Calu3 (cell line): ENCODE measurements at regions of chr20 and their contacts with region 1.

Region 1: DNA sequence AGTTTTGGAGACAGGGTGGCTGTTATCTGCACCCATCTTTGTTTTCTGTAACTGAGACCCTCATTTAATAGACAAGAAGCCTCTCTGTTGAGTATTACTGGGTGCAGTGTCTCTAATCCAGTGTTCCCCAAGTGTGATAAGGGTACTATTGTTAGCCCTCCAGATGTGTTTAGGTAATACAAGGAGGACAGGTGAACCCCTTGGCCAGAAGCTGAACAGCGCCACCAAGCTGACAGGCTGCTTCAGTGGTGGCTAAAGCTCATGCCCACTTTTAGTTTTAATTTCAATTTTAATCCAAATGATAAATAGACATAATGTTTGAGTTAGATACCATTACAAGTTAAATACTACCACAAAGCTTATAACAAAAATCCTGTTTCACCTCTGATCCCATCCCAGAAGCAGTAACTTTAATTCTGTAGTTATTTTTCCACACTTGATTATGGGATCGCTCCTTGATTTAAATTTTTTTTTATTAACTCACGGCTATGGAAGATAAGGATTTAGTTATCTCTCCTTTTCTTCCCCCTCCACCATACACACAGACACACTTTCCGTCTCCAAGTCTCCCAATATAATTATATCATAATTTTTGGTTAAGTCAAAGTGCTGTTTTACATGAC is 8.4 kb upstream of the STK35 start:
- DNase-seq: peak; percentile 42
- H3K4me3 Mint-ChIP-seq: no peak overlapping the region
- H3K27ac Mint-ChIP-seq: no peak overlapping the region
- H3K4me1 Mint-ChIP-seq: no peaks in the 10 kb centered on the region
- H3K27me3 Mint-ChIP-seq: peaks cover 53% of the 10 kb centered on the region
- CTCF ChIP-seq: peak; percentile 46

Region 2: GRCh38 chr20:1764136-1765033 is 328.9 kb before region 1 on chr20:
- CTCF ChIA-PET with region 1: no interaction called
- intact Hi-C with region 1: loop called (anchors 2 kb)
- DNase-seq: peak; percentile 72
- H3K4me3 Mint-ChIP-seq: no peak overlapping the region
- H3K27ac Mint-ChIP-seq: no peak overlapping the region
- H3K4me1 Mint-ChIP-seq: peaks cover 15% of the 10 kb centered on the region
- H3K27me3 Mint-ChIP-seq: no peaks in the 10 kb centered on the region
- CTCF ChIP-seq: peak; percentile 65

Region 3: GRCh38 chr20:1965520-1966351 is 127.5 kb before region 1 on chr20:
- CTCF ChIA-PET with region 1: interaction called, 4 read pairs
- intact Hi-C with region 1: loop called (anchors 2 kb)
- DNase-seq: peak; percentile 77
- H3K4me3 Mint-ChIP-seq: peak overlapping the region; percentile 16
- H3K27ac Mint-ChIP-seq: no peak overlapping the region
- H3K4me1 Mint-ChIP-seq: no peaks in the 10 kb centered on the region
- H3K27me3 Mint-ChIP-seq: peaks cover 57% of the 10 kb centered on the region
- CTCF ChIP-seq: peak; percentile 72

Region 4: GRCh38 chr20:2005831-2006426 is 87.3 kb before region 1 on chr20:
- CTCF ChIA-PET with region 1: interaction called, 3 read pairs
- intact Hi-C with region 1: loop called (anchors 1 kb)
- DNase-seq: peak; percentile 73
- H3K4me3 Mint-ChIP-seq: no peak overlapping the region
- H3K27ac Mint-ChIP-seq: no peak overlapping the region
- H3K4me1 Mint-ChIP-seq: no peaks in the 10 kb centered on the region
- H3K27me3 Mint-ChIP-seq: peaks cover 42% of the 10 kb centered on the region
- CTCF ChIP-seq: no peak

Region 5: DNA sequence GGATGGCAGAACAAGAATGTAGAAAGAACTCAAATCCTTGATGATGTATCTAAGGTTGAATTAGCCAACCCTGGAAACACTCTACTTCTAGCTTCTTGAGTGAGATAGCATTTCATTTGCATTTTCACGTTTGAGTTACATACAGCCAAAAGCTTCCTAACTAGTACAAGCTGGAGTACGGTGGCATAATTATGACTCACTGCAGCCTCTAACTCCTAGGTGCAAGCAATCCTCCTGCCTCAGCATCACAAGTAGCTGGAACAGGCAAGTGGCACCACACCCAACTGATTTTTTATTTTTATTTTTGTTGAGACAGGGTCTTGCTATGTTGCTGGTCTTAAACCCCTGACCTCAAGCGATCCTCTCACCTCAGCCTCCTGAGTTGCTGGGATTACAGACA is 28.2 kb before region 1 on chr20:
- CTCF ChIA-PET with region 1: no interaction called
- intact Hi-C with region 1: no loop called
- DNase-seq: no peak
- H3K4me3 Mint-ChIP-seq: no peak overlapping the region
- H3K27ac Mint-ChIP-seq: no peak overlapping the region
- H3K4me1 Mint-ChIP-seq: no peaks in the 10 kb centered on the region
- H3K27me3 Mint-ChIP-seq: peaks cover 37% of the 10 kb centered on the region
- CTCF ChIP-seq: no peak

Region 6: DNA sequence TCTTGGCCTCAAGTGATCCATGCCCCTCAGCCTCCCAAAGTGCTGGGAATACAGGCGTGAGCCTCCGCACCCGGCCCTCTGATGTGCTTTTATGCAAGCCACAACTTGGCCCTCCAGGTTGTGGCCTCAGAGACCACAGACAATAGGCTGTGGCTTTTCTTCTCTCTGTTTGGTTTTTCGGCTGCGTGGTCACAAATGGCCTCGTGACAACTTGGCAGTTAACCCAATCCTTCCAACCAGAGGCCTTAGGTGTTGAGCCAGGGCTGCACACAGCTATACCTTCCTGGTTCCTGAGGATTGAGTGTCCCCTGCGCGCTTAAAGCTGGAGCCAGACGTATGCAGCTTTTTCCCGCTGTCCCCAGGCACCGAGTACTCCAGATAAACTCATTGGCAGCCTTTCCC is 196.2 kb after region 1 on chr20:
- CTCF ChIA-PET with region 1: no interaction called
- intact Hi-C with region 1: no loop called
- DNase-seq: no peak
- H3K4me3 Mint-ChIP-seq: no peak overlapping the region
- H3K27ac Mint-ChIP-seq: peak overlapping the region; percentile 48
- H3K4me1 Mint-ChIP-seq: peaks cover 16% of the 10 kb centered on the region
- H3K27me3 Mint-ChIP-seq: no peaks in the 10 kb centered on the region
- CTCF ChIP-seq: no peak